ENCODE measurements at regions of chr5 and their contacts with region 1.

Region 1: GRCh38 chr5:142324871-142325724 is at the start of gene SPRY4:
- DNase-seq: peak; percentile 69 to 90 (median 78)
- ATAC-seq: peak; percentile 75 to 79
- H3K4me3 Mint-ChIP-seq: peak within 1 kb of the TSS; percentile 78 to 92 (median 88)
- H3K27ac Mint-ChIP-seq: peak within 1 kb of the TSS in 5 of 10 donors; percentile 31 to 86 (median 52)
- H3K4me1 Mint-ChIP-seq: peaks cover 16 to 48% (median 30%) of the 10 kb centered on the region in 4 donors
- H3K27me3 Mint-ChIP-seq: peaks cover 43 to 98% (median 63%) of the 10 kb centered on the region in 5 donors
- polyA plus RNA-seq, gene SPRY4: not detected

Region 2: GRCh38 chr5:142296914-142297417 is 28.1 kb before region 1 on chr5:
- POLR2A ChIA-PET with region 1: no interaction called
- DNase-seq: no peak
- ATAC-seq: no peak
- H3K4me3 Mint-ChIP-seq: no peak overlapping the region
- H3K27ac Mint-ChIP-seq: no peak overlapping the region
- H3K4me1 Mint-ChIP-seq: peaks cover 0 to 7% (median 6%) of the 10 kb centered on the region in 4 donors
- H3K27me3 Mint-ChIP-seq: peaks cover 0 to 14% (median 4%) of the 10 kb centered on the region in 5 donors

Region 3: GRCh38 chr5:142356716-142357473 is 31.8 kb after region 1 on chr5:
- POLR2A ChIA-PET with region 1: interaction called, 19 read pairs
- DNase-seq: peak; percentile 75 to 91 (median 84)
- ATAC-seq: peak; percentile 84 to 88
- H3K4me3 Mint-ChIP-seq: peak overlapping the region; percentile 75 to 90 (median 87)
- H3K27ac Mint-ChIP-seq: peak overlapping the region; percentile 57 to 89 (median 79)
- H3K4me1 Mint-ChIP-seq: peaks cover 15 to 51% (median 47%) of the 10 kb centered on the region in 4 donors
- H3K27me3 Mint-ChIP-seq: peaks cover 0 to 2% (median 0%) of the 10 kb centered on the region in 5 donors